A549 (cell line): ENCODE measurements at regions of chr19 and their contacts with region 1.

Region 1: DNA sequence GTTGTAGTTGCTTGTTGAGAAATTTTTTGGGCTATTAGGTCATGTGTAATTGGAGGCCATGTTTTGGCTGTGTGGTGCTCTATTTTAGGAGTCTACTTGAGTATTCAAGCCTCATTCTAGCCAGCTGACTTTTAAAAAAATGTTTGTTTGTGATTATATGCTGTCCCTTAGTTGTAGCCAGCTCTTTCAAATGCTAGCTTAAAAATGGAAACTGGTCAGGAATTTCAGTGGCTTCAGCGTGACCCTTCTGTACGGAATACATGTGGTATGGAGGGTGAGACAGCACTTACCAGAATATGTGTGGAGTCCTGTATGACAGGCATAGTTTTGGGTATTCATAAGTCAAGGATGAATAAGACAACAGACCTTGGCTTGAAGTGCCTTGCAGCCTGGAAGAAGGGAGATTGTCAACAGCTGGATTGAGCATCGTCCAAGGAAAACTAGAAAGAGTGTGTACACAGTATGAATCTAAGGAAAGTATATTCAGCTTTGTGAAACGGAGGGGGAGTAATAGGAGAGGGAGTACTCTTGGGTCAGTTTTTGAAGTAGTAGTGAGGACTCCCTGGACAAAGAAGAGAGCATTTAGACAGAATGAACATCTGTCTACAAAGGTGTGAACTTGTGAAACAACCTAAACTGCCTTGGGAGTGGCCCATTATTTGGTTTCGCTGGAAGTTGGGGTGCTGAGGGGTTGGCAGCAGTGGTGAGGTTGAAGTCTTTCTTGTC is 20.0 kb upstream of the WTIP start:
- DNase-seq: no peak
- ATAC-seq: no peak
- H3K4me3 ChIP-seq: no peak overlapping the region
- H3K27ac ChIP-seq: no peak overlapping the region
- H3K4me1 ChIP-seq: no peaks in the 10 kb centered on the region
- CTCF ChIP-seq: no peak
- EP300 ChIP-seq: no peak
- POLR2A ChIP-seq: no peak
- RAD21 ChIP-seq: no peak

Region 2: DNA sequence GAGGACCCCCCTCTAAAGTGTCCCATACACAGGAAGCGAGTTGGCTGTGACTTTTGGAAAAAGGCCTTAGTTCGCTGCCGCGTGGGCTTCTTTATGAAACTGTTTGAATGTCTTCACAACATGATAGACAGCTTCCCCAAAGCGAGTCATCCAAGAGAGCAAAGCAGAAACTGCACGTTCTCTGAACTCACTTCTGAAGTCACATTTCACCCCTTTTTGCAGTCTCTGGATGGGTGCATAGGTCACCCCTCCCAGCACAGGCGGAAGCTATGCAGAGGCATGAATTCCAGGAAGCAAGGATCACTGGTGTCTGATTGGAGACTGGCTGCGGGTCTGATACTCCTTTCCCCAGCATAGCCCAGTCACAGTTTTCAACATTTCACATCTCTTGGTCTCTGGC is 85.9 kb before region 1 on chr19:
- CTCF ChIA-PET with region 1: no interaction called
- POLR2A ChIA-PET with region 1: interaction called, 10 read pairs
- DNase-seq: no peak
- ATAC-seq: no peak
- H3K4me3 ChIP-seq: no peak overlapping the region
- H3K27ac ChIP-seq: no peak overlapping the region
- H3K4me1 ChIP-seq: no peaks in the 10 kb centered on the region
- CTCF ChIP-seq: no peak
- EP300 ChIP-seq: no peak
- POLR2A ChIP-seq: no peak
- RAD21 ChIP-seq: no peak

Region 3: DNA sequence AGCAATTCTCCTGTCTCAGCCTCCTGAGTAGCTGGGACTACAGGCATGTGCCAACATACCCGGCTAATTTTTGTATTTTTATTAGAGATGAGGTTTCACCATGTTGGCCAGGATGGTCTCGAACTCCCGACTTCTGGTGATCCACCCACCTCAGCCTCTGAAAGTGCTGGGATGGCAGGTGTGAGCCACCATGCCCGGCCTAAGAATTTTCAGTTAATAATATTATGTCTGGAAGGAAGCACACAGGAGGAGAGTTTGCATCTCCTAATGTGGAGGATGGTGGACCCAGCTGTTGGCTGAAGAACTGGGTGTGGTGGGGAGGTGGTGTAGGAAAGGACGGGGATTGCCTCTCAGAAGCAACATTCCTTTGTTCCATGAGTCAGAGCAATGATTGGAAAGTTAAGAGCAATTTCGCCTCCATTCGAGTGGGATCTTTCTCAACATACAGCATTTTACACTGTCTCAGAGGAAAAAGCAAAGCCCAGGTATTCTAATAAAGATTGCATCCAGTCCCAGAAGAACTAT is 45.5 kb before region 1 on chr19:
- CTCF ChIA-PET with region 1: no interaction called
- POLR2A ChIA-PET with region 1: no interaction called
- DNase-seq: no peak
- ATAC-seq: 0 out of 6 replicates have a peak, but pooled peaks of 1 of the 2 experiments have one; percentile 24
- H3K4me3 ChIP-seq: no peak overlapping the region
- H3K27ac ChIP-seq: no peak overlapping the region
- H3K4me1 ChIP-seq: no peaks in the 10 kb centered on the region
- CTCF ChIP-seq: no peak
- EP300 ChIP-seq: no peak
- POLR2A ChIP-seq: no peak
- RAD21 ChIP-seq: no peak

Region 4: DNA sequence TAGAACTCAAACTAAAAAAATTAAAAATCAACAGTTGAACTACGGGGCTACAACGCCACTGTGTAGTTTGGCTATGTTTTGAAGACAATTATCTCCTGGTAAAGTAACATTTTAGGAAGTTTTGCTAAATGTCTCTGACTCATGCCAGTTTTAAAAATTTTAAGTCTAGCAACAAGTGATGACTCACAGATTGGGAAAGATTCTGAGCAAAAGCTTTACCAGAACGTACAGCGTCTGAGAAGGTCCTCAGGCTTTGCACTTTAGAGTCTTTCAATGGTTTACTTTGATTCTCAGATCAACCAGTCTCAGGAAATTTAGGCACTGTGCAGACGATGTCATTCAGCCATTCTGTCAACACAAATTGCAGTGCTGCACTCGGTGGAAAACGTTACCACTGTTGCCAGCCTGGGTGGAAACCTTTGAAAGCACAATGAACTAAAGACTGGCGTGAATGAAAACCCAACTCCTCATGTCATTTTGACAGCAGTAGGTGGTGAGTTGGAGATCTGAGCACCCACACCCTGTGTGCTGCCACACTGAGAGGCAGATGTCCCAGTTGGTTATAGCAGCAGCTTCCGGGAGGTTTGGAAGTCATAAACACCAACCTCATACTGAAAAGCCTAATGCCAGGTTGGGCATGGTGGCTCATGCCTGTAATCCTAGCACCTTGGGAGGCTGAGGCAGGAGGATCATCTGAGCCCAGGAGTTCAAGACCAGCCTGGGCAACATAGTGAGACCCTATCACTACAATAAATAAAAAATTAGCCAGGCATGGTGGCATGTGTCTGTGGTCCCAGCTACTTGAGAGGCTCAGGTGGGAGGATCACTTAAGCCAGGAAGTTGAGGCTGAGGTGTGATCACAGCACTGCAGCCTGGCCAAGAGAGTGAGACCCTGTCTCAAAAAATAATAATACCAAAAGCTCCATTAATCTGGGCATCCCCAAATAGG is 13.8 kb after region 1 on chr19:
- CTCF ChIA-PET with region 1: interaction called, 37 read pairs
- POLR2A ChIA-PET with region 1: no interaction called
- DNase-seq: peak in 1 of 2 experiments; percentile 52
- ATAC-seq: peak; percentile 33 to 55
- H3K4me3 ChIP-seq: no peak overlapping the region
- H3K27ac ChIP-seq: peak overlapping the region in 1 of 2 experiments; percentile 40; a peak in 3 of 6 replicates
- H3K4me1 ChIP-seq: peaks cover 19% of the 10 kb centered on the region
- CTCF ChIP-seq: no peak
- EP300 ChIP-seq: no peak
- POLR2A ChIP-seq: no peak
- RAD21 ChIP-seq: no peak

Region 5: GRCh38 chr19:34787057-34787824 is 325.7 kb after region 1 on chr19:
- CTCF ChIA-PET with region 1: no interaction called
- POLR2A ChIA-PET with region 1: no interaction called
- DNase-seq: no peak
- ATAC-seq: no peak
- H3K4me3 ChIP-seq: no peak overlapping the region
- H3K27ac ChIP-seq: no peak overlapping the region
- H3K4me1 ChIP-seq: no peaks in the 10 kb centered on the region
- CTCF ChIP-seq: no peak
- EP300 ChIP-seq: no peak
- POLR2A ChIP-seq: no peak
- RAD21 ChIP-seq: no peak